Left ventricle myocardium inferior (tissue), 1 donor: ENCODE measurements at regions of chr11 and their contacts with region 1.

Region 1: GRCh38 chr11:44190868-44191200 is 95.4 kb downstream of the EXT2 start:
- DNase-seq: no peak
- H3K4me3 ChIP-seq: no peak overlapping the region
- H3K27ac ChIP-seq: no peak overlapping the region
- H3K4me1 ChIP-seq: peaks cover 13% of the 10 kb centered on the region
- H3K27me3 ChIP-seq: no peaks in the 10 kb centered on the region
- CTCF ChIP-seq: no peak

Region 2: GRCh38 chr11:44256673-44257291 is 65.9 kb after region 1 on chr11:
- intact Hi-C with region 1: loop called (anchors 10 kb)
- DNase-seq: peak; percentile 54
- H3K4me3 ChIP-seq: no peak overlapping the region
- H3K27ac ChIP-seq: no peak overlapping the region
- H3K4me1 ChIP-seq: peaks cover 13% of the 10 kb centered on the region
- H3K27me3 ChIP-seq: no peaks in the 10 kb centered on the region
- CTCF ChIP-seq: no peak